Activated CD8-positive, alpha-beta memory T cell treated with anti-CD3 and anti-CD28 coated beads, Interleukin-2, amount 10 ng/mL, durations not matched to agents 7 days and 5 days (primary cell): ENCODE measurements at regions of chr1 and their contacts with region 1.

Region 1: DNA sequence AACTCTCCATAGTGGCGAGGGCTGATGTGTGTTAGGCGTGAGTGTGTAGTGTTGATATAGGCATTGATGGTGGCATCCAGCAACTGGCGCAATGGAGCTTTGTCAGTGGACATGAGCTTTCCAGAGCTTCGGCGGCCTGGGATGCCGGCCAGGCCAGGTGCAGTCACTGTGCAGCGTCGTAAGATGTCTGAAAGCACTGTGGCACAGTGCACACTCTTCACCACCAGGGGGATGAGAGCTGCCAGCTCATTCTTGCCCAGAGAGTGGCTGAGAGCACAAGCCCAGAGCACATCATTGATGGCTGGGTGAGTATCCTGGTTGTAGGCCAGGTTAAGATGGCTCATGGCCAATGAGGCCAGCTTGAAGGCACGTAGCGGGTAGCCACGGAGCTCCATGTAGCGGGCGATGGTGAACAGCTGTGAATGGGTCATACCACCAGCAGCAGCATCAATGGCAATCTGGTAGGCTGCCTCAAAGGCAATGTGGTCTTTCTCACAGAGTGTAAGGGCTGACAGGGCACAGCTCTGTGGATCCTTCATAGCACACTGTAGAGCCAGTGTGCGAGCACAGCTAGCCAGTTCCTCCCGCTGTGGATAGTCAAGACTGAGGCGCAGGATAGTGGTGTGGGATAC is 6.7 kb downstream of the UROD start:
- DNase-seq: peak; percentile 67
- ATAC-seq: peak; percentile 82
- H3K4me3 Mint-ChIP-seq: no peak overlapping the region
- H3K27ac Mint-ChIP-seq: no peak overlapping the region
- H3K4me1 Mint-ChIP-seq: peaks cover 12% of the 10 kb centered on the region
- H3K27me3 Mint-ChIP-seq: no peaks in the 10 kb centered on the region

Region 2: DNA sequence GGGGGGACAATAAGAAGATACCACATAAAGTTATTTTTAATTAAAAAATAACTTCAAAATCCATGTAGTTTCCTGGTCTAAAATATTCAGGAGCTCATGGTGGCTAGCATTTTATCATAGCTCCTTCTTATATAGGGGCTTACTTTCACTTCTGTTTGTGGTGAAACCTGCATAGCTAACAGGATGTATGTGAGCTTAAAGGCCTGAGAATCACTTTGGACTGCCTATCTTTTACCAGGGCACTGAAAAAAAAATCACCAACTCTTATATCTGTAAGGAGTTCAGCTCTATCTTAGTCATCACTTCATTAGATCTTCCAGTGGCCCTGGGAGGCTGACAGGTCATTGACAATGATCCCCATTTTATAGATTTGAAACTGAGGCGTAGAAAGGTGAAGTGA is 14.6 kb after region 1 on chr1:
- CTCF ChIA-PET with region 1: interaction called, 21 read pairs
- DNase-seq: no peak
- ATAC-seq: peak; percentile 67
- H3K4me3 Mint-ChIP-seq: no peak overlapping the region
- H3K27ac Mint-ChIP-seq: no peak overlapping the region
- H3K4me1 Mint-ChIP-seq: peaks cover 13% of the 10 kb centered on the region
- H3K27me3 Mint-ChIP-seq: no peaks in the 10 kb centered on the region

Region 3: GRCh38 chr1:45134468-45134873 is 115.8 kb after region 1 on chr1:
- CTCF ChIA-PET with region 1: no interaction called
- DNase-seq: no peak
- ATAC-seq: no peak
- H3K4me3 Mint-ChIP-seq: no peak overlapping the region
- H3K27ac Mint-ChIP-seq: no peak overlapping the region
- H3K4me1 Mint-ChIP-seq: no peaks in the 10 kb centered on the region
- H3K27me3 Mint-ChIP-seq: no peaks in the 10 kb centered on the region